GM12878 (cell line): ENCODE measurements at regions of chr12 and their contacts with region 1.

Region 1: GRCh38 chr12:122356192-122356635 is 66.3 kb downstream of the CLIP1 start:
- DNase-seq: peak; percentile 19
- ATAC-seq: peak; percentile 96
- H3K4me3 ChIP-seq: no peak overlapping the region
- H3K27ac ChIP-seq: no peak overlapping the region
- H3K4me1 ChIP-seq: no peaks in the 10 kb centered on the region
- H3K27me3 ChIP-seq: no peaks in the 10 kb centered on the region
- CTCF ChIP-seq: peak; percentile 72 to 81 (median 74)
- EP300 ChIP-seq: no peak
- POLR2A ChIP-seq: no peak
- RAD21 ChIP-seq: peak; percentile 61

Region 2: GRCh38 chr12:122182887-122183585 is 173.2 kb before region 1 on chr12 and contains the start of gene LRRC43:
- CTCF ChIA-PET with region 1: no interaction called
- POLR2A ChIA-PET with region 1: no interaction called
- RAD21 ChIA-PET with region 1: no interaction called
- SMC1A ChIA-PET with region 1: no interaction called
- in situ Hi-C with region 1: no loop called
- intact Hi-C with region 1: no loop called
- DNase-seq: no peak
- ATAC-seq: peak; percentile 79
- H3K4me3 ChIP-seq: peak within 1 kb of the TSS; percentile 50; the same call in 1 of the 2 replicates
- H3K27ac ChIP-seq: no peak within 1 kb of the TSS
- H3K4me1 ChIP-seq: peaks cover 7% of the 10 kb centered on the region
- H3K27me3 ChIP-seq: no peaks in the 10 kb centered on the region; a peak in 1 of 4 replicates
- CTCF ChIP-seq: no peak
- EP300 ChIP-seq: no peak
- POLR2A ChIP-seq: no peak
- RAD21 ChIP-seq: no peak
- polyA plus RNA-seq, gene LRRC43: not detected

Region 3: DNA sequence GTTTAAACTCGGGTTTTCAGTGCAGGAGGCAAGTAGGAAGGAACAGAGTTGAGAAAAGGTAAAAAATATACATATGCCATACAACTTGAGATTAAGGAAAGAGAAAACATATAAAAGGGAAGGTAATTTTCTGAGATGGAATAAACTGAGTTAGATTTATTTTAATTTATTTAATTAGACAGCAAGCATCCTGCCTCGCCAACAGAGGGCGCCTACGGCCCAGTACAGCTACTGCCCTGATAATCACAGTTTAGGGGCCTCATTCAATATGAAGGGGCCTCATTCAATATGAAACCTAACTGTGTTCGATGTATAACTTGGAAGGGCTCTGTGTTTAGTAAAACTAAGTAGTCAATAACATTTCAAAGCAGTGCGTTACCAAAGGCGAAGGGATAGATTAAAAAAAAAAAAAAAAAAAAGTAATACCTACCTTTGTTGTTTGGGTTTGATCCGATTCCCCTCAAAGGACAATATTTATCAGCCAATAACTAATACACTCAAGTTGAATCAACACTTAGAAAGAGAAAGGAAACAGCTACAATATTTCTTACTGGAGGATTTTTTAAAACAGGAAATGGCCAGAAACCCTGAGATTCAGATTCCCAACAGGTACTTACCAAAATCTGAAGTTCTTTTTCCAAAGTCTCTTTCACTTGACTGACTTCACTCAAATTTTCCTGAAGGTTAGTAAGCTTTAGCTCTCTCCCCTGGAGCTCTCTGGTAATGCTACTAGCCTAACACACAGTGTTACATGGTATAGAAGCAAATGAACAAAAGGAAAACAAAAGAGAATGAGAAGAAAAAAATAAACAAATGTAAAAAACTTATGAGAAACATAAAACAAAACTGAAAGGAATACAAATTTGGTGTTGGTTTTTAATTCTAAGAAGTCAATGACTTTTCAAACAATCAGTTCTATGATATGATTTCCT is 19.9 kb before region 1 on chr12:
- CTCF ChIA-PET with region 1: interaction called, 65 read pairs
- POLR2A ChIA-PET with region 1: no interaction called
- RAD21 ChIA-PET with region 1: interaction called, 5 read pairs
- SMC1A ChIA-PET with region 1: interaction called, 4 read pairs
- in situ Hi-C with region 1: no loop called
- intact Hi-C with region 1: no loop called
- DNase-seq: no peak
- ATAC-seq: peak; percentile 79
- H3K4me3 ChIP-seq: peak overlapping the region; percentile 62; the same call in 1 of the 2 replicates
- H3K27ac ChIP-seq: peak overlapping the region; percentile 34; the same call in 1 of the 2 replicates
- H3K4me1 ChIP-seq: no peaks in the 10 kb centered on the region
- H3K27me3 ChIP-seq: no peaks in the 10 kb centered on the region
- CTCF ChIP-seq: peak; percentile 68 to 74 (median 73)
- EP300 ChIP-seq: no peak
- POLR2A ChIP-seq: no peak
- RAD21 ChIP-seq: peak; percentile 68